H1 (cell line): ENCODE measurements at regions of chr1 and their contacts with region 1.

Region 1: DNA sequence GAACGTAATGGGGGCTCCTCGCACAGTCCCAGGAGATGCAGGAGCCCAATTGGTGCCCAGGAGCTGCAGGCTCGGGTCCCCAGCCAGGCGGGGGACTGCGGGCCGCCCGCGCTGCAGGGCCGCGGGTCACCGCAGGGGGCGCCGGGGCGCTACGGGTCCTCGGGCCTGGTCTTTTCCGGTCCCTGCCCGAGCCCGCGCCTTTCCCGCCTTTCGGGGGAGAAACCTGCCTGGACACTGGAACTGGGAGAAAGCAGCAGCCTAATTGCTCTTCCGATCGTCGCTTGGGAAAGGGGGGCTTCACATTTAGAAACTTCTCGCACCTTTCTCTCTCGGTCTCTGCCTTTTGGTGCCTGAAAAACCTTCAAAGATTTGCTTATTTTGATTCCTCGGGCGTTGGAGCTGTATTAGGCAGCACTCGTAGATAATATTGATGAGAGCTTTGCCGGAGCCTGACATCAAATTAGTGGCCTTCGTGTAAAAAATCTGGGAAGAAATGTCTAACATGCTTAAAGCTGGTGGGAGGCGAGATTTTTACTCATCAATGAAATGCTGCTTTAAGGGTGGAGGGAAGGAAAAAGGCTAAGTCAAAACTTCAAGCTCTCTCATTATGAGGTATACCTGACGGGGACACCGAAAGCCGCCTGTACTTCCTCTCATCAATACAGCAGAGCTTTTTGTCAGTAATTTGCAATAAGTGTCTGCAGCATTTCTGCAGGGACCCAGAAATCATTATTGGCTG is 12.6 kb upstream of the BARHL2 start:
- DNase-seq: peak in 1 of 2 experiments; percentile 92
- H3K4me3 ChIP-seq: peak overlapping the region in 3 of 4 experiments; percentile 36 to 55 (median 37); a peak in 5 of 8 replicates
- H3K27ac ChIP-seq: no peak overlapping the region
- H3K4me1 ChIP-seq: peaks cover 14 to 41% (median 27%) of the 10 kb centered on the region in 4 experiments
- H3K27me3 ChIP-seq: peaks cover 64 to 94% (median 86%) of the 10 kb centered on the region in 4 experiments
- CTCF ChIP-seq: peak; percentile 80 to 88 (median 82)
- EP300 ChIP-seq: no peak
- POLR2A ChIP-seq: no peak
- RAD21 ChIP-seq: peak; percentile 80 to 89

Region 2: DNA sequence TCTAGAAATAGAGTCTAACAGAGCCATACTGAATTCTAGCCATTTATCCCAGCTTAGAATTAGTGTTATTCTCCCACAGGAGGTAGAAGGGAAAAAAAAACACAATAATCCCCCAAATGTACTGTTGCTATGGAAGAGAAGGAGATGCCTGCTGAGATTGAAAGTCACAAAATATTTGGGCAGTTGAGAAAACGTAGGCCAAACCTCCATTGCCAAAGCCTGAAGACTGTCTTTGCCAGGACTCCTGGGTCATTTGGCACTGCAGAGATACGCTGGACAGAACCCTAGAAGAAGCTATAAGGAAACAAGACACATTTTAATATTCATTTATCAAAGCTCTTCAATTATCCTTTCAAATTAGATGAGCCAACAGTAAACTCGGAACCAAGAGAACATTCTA is 34.8 kb before region 1 on chr1:
- CTCF ChIA-PET with region 1: no interaction called
- POLR2A ChIA-PET with region 1: no interaction called
- DNase-seq: no peak
- H3K4me3 ChIP-seq: no peak overlapping the region
- H3K27ac ChIP-seq: no peak overlapping the region
- H3K4me1 ChIP-seq: no peaks in the 10 kb centered on the region
- H3K27me3 ChIP-seq: no peaks in the 10 kb centered on the region
- CTCF ChIP-seq: no peak
- EP300 ChIP-seq: no peak
- POLR2A ChIP-seq: no peak
- RAD21 ChIP-seq: no peak

Region 3: GRCh38 chr1:90810681-90811080 is 81.0 kb after region 1 on chr1:
- CTCF ChIA-PET with region 1: interaction called, 11 read pairs
- POLR2A ChIA-PET with region 1: no interaction called
- DNase-seq: no peak
- H3K4me3 ChIP-seq: no peak overlapping the region
- H3K27ac ChIP-seq: no peak overlapping the region
- H3K4me1 ChIP-seq: peaks cover 5 to 12% (median 8%) of the 10 kb centered on the region in 4 experiments
- H3K27me3 ChIP-seq: peaks cover 29 to 46% (median 38%) of the 10 kb centered on the region in 4 experiments
- CTCF ChIP-seq: no peak
- EP300 ChIP-seq: no peak
- POLR2A ChIP-seq: no peak
- RAD21 ChIP-seq: no peak

Region 4: DNA sequence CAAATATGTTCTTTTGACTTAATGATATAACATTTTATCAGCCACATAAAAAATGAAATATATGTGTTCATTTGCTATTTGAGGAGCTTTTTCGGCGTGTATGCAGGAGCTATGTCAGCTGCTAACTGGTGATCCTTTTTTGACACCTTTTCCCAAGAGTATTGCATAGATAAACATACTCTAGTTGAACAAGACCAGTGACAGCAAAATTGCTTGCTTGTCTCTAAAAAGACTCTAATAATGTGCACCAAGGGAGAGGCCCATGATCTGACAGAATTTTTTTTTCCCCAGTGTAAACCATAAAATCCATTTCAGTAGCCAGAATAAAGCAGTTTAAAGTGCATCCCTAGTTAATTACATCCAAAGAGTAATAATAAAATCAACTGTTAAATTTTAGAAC is 91.1 kb after region 1 on chr1:
- CTCF ChIA-PET with region 1: no interaction called
- POLR2A ChIA-PET with region 1: no interaction called
- DNase-seq: no peak
- H3K4me3 ChIP-seq: no peak overlapping the region
- H3K27ac ChIP-seq: no peak overlapping the region
- H3K4me1 ChIP-seq: no peaks in the 10 kb centered on the region
- H3K27me3 ChIP-seq: peaks cover 0 to 2% (median 0%) of the 10 kb centered on the region in 4 experiments; a peak in 3 of 7 replicates
- CTCF ChIP-seq: no peak
- EP300 ChIP-seq: no peak
- POLR2A ChIP-seq: no peak
- RAD21 ChIP-seq: no peak

Region 5: GRCh38 chr1:90841473-90841872 is 111.8 kb after region 1 on chr1:
- CTCF ChIA-PET with region 1: interaction called, 17 read pairs
- POLR2A ChIA-PET with region 1: interaction called, 4 read pairs
- DNase-seq: peak in 1 of 2 experiments; percentile 74
- H3K4me3 ChIP-seq: peak overlapping the region; percentile 27 to 57 (median 32); a peak in 7 of 8 replicates
- H3K27ac ChIP-seq: no peak overlapping the region
- H3K4me1 ChIP-seq: peaks cover 5 to 31% (median 25%) of the 10 kb centered on the region in 4 experiments; a peak in 6 of 7 replicates
- H3K27me3 ChIP-seq: peaks cover 31 to 78% (median 60%) of the 10 kb centered on the region in 4 experiments
- CTCF ChIP-seq: peak in 1 of 3 experiments; percentile 9; a peak in 1 of 4 replicates
- EP300 ChIP-seq: no peak
- POLR2A ChIP-seq: no peak
- RAD21 ChIP-seq: no peak

Region 6: GRCh38 chr1:90964444-90965035 is 234.9 kb after region 1 on chr1:
- CTCF ChIA-PET with region 1: interaction called, 15 read pairs
- POLR2A ChIA-PET with region 1: interaction called, 3 read pairs
- DNase-seq: no peak
- H3K4me3 ChIP-seq: no peak overlapping the region
- H3K27ac ChIP-seq: no peak overlapping the region
- H3K4me1 ChIP-seq: no peaks in the 10 kb centered on the region
- H3K27me3 ChIP-seq: no peaks in the 10 kb centered on the region
- CTCF ChIP-seq: peak in 1 of 3 experiments; percentile 22; a peak in 1 of 4 replicates
- EP300 ChIP-seq: no peak
- POLR2A ChIP-seq: no peak
- RAD21 ChIP-seq: peak in 1 of 2 experiments; percentile 64; a peak in 3 of 4 replicates